PC-3 (cell line): ENCODE measurements at regions of chr20 and their contacts with region 1.

Region 1: GRCh38 chr20:50980851-50981713 is 22.5 kb downstream of the MOCS3 start:
- DNase-seq: peak; percentile 94
- ATAC-seq: peak; percentile 27
- H3K4me3 ChIP-seq: peak overlapping the region; percentile 20; the same call in 1 of the 2 replicates
- H3K27ac ChIP-seq: peak overlapping the region; percentile 87
- H3K4me1 ChIP-seq: peaks cover 40% of the 10 kb centered on the region
- H3K27me3 ChIP-seq: no peaks in the 10 kb centered on the region
- CTCF ChIP-seq: peak; percentile 99

Region 2: GRCh38 chr20:50837532-50838506 is 143.3 kb before region 1 on chr20:
- CTCF ChIA-PET with region 1: no interaction called
- POLR2A ChIA-PET with region 1: no interaction called
- intact Hi-C with region 1: no loop called
- DNase-seq: peak; percentile 11
- ATAC-seq: peak; percentile 40; the same call in 1 of the 2 replicates
- H3K4me3 ChIP-seq: no peak overlapping the region
- H3K27ac ChIP-seq: no peak overlapping the region
- H3K4me1 ChIP-seq: no peaks in the 10 kb centered on the region
- H3K27me3 ChIP-seq: no peaks in the 10 kb centered on the region
- CTCF ChIP-seq: no peak

Region 3: GRCh38 chr20:50901308-50901707 is 79.8 kb before region 1 on chr20:
- CTCF ChIA-PET with region 1: no interaction called
- POLR2A ChIA-PET with region 1: no interaction called
- intact Hi-C with region 1: no loop called
- DNase-seq: no peak
- ATAC-seq: no peak
- H3K4me3 ChIP-seq: no peak overlapping the region
- H3K27ac ChIP-seq: no peak overlapping the region
- H3K4me1 ChIP-seq: no peaks in the 10 kb centered on the region
- H3K27me3 ChIP-seq: no peaks in the 10 kb centered on the region
- CTCF ChIP-seq: no peak

Region 4: DNA sequence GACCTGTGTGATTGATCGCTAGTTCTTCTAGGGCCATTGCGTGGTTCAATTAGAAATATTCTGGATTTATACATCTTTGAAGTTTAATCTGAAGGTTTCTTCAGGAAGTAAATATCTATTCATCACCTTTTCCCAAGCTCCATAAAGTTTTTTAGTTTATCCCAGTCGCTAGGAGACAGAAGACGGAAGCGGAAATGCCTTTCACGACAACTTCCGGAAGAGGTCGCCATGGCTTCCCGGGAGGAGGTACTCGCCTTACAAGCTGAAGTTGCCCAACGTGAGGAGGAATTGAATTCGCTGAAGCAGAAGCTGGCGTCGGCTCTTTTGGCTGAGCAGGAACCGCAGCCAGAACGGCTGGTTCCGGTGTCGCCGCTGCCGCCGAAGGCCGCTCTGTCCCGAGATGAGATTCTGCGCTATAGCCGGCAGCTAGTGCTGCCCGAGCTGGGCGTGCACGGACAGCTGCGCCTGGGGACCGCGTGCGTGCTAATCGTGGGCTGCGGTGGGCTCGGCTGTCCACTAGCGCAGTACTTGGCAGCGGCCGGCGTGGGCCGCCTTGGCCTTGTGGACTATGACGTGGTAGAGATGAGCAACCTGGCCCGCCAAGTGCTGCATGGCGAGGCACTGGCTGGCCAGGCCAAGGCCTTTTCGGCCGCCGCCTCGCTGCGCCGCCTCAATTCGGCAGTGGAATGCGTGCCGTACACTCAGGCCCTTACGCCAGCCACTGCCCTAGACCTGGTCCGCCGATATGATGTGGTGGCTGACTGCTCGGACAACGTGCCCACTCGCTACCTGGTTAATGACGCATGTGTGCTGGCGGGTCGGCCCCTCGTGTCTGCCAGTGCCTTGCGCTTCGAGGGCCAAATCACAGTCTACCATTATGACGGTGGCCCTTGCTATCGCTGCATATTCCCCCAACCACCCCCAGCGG is 22.2 kb before region 1 on chr20 and contains the start of gene MOCS3:
- CTCF ChIA-PET with region 1: interaction called, 7 read pairs
- POLR2A ChIA-PET with region 1: interaction called, 3 read pairs
- intact Hi-C with region 1: loop called (anchors 1 kb)
- DNase-seq: peak; percentile 98
- ATAC-seq: peak; percentile 74
- H3K4me3 ChIP-seq: peak within 1 kb of the TSS; percentile 92
- H3K27ac ChIP-seq: peak within 1 kb of the TSS; percentile 80
- H3K4me1 ChIP-seq: peaks cover 39% of the 10 kb centered on the region
- H3K27me3 ChIP-seq: no peaks in the 10 kb centered on the region
- CTCF ChIP-seq: no peak
- total RNA-seq, gene MOCS3: 11.3 and 13.4 TPM in 2 replicates

Region 5: DNA sequence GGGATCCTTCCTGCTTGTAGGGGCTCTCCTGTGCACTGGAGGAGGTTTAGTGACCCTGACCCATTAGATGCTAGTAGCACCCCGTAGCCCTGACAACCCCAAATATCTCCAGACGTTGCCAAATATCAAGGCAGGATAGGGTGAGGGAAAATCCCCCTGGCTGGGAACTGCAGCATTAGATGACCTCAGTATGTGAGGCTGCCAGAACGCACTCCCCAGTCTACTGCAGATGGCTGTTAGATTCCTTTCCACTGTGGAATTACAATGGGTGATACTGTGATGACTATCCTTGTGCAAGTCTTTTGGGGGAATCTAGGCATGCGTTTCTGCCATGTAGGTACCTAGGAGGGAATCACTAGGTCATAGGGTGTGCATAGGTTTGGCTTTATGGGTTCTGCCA is 268.1 kb after region 1 on chr20:
- CTCF ChIA-PET with region 1: no interaction called
- POLR2A ChIA-PET with region 1: no interaction called
- intact Hi-C with region 1: no loop called
- DNase-seq: no peak
- ATAC-seq: no peak
- H3K4me3 ChIP-seq: no peak overlapping the region
- H3K27ac ChIP-seq: no peak overlapping the region
- H3K4me1 ChIP-seq: no peaks in the 10 kb centered on the region
- H3K27me3 ChIP-seq: peaks cover 8% of the 10 kb centered on the region; the same call in 1 of the 2 replicates
- CTCF ChIP-seq: no peak

Region 6: DNA sequence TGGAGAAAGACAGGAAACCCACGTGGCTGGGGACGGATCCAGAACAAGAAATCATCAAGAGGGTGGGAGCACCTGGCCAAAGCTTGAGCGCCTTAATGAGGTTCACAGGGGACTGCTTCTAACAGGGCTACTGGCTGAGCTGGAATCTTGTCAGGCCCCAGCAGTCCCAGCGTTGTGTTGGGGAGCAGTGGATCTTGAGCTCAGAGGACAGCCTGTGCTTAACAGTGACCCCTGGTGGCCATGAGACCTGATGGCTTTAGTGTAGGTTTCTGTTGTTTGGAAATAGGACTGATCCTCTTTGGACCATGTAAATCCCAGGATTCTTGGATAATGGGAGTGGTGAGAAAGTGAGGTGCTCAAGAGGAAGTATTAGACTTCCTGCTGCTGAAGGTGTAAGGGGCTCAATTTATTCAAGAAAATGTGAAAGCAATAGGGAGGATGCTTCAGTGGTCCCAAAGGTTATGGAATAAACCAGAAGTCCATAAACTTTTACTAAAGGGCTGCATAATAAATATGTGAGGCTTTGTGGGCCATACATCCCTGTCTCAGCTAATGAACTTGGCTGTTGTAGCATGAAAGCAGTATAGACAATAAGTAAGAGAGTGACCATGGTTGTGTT is 345.2 kb after region 1 on chr20:
- CTCF ChIA-PET with region 1: no interaction called
- POLR2A ChIA-PET with region 1: no interaction called
- intact Hi-C with region 1: loop called (anchors 1 kb)
- DNase-seq: no peak
- ATAC-seq: no peak
- H3K4me3 ChIP-seq: no peak overlapping the region
- H3K27ac ChIP-seq: peak overlapping the region; percentile 88
- H3K4me1 ChIP-seq: peaks cover 17% of the 10 kb centered on the region
- H3K27me3 ChIP-seq: no peaks in the 10 kb centered on the region
- CTCF ChIP-seq: peak; percentile 77

Region 7: GRCh38 chr20:51350941-51351631 is 370.0 kb after region 1 on chr20:
- CTCF ChIA-PET with region 1: no interaction called
- POLR2A ChIA-PET with region 1: no interaction called
- intact Hi-C with region 1: loop called (anchors 2 kb)
- DNase-seq: peak; percentile 97
- ATAC-seq: peak; percentile 71
- H3K4me3 ChIP-seq: peak overlapping the region; percentile 41
- H3K27ac ChIP-seq: peak overlapping the region; percentile 92
- H3K4me1 ChIP-seq: peaks cover 65% of the 10 kb centered on the region
- H3K27me3 ChIP-seq: no peaks in the 10 kb centered on the region
- CTCF ChIP-seq: no peak

Region 8: DNA sequence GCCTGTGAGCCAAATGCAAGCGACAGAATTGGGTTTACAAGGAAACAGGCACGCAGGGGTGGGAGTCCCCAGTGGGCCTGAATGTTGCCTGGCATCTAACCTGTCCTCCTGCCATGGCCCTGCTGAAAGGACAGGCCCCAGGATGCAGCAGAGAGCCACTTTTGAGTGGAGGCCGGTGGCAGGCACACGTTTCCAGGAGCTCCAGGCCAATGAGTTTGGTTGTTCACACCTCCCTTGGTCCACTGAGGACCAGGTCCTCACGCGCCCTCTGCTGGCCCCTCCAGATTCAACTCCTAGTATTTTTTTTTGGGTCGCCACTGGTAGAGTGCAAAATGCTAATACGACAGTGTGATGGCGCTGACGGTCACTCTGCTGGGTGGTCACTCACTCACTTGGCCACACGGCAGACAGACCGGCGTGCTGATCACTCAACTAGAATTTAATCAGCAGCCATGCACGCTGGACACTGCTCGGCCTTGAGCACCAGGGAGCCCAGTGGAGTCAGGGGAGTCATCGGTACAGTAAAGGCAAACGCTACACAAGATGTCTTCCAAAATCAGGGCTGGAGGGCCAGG is 643.2 kb after region 1 on chr20:
- CTCF ChIA-PET with region 1: no interaction called
- POLR2A ChIA-PET with region 1: no interaction called
- intact Hi-C with region 1: loop called (anchors 5 kb)
- DNase-seq: peak; percentile 94
- ATAC-seq: peak; percentile 52
- H3K4me3 ChIP-seq: no peak overlapping the region
- H3K27ac ChIP-seq: peak overlapping the region; percentile 27
- H3K4me1 ChIP-seq: peaks cover 20% of the 10 kb centered on the region
- H3K27me3 ChIP-seq: no peaks in the 10 kb centered on the region
- CTCF ChIP-seq: peak; percentile 97